Endothelial cell of umbilical vein (primary cell): ENCODE measurements at regions of chr1 and their contacts with region 1.

Region 1: DNA sequence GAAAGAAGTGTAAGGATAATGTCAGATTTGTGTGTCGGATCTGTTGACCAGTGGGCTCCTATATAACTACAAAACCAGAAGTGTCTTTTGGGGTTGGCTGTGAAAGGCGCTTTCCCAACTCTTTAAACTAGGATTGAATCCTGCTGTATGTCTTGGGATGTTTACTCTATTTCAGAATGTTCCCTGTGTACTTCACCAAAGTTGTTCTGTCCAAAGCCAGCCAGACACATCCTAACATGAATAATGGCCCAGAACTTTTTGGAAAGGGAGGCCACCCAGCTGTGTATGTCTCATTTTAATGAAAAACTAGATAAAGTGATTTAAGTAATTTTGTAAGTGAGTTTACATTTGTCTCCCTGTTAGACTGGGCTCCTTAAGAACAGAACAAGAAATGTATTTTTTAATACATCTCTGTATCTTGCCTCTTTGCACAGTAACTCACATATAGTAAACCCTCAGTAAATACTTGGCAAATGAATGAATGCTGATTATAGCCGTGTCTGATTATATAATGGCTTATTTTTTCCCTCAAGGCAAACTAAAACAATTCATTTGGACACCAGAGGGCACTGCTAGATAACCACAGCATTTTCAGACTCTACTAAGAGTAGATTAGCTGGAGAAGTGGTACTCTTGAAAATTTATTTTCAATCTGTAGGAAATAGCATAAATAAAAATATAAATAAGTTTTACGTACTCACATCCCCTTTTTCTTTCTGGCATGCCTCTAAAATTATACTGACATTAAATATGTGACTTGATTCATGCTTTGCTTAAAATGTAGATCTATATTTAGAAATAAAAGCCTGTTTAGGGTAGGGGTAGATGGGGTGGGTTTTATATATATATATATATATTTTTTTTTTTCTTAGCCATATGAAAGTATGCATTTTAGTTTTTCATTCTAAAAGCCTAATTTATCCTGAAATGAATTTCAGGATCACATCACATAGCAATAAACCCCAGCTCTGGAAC is 23.8 kb downstream of the TSEN15 start:
- DNase-seq: peak; percentile 75
- H3K4me3 ChIP-seq: no peak overlapping the region
- H3K27ac ChIP-seq: no peak overlapping the region
- H3K4me1 ChIP-seq: no peaks in the 10 kb centered on the region
- H3K27me3 ChIP-seq: no peaks in the 10 kb centered on the region
- CTCF ChIP-seq: peak; percentile 40 to 44
- POLR2A ChIP-seq: no peak

Region 2: DNA sequence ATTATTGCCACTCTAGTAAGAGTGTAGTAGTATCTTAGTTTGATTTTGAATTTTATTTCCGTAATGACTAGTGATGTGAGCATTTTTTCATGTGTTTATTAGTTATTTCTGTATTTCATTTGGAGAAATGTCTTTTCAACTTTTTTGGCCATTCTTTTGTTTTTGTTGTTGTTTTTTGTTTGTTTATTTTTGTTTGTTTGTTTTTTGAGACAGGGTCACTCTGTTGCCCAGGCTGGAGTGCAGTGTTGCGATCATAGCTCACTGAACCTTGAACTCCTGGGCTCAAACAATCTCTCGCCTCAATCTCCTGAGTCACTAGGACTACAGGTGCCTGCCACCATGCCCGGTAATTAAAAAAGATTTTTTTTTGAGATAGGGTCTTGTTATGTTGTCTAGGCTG is 52.2 kb after region 1 on chr1:
- CTCF ChIA-PET with region 1: no interaction called
- POLR2A ChIA-PET with region 1: no interaction called
- dilution Hi-C with region 1: no loop called
- intact Hi-C with region 1: no loop called
- DNase-seq: no peak
- H3K4me3 ChIP-seq: no peak overlapping the region
- H3K27ac ChIP-seq: no peak overlapping the region
- H3K4me1 ChIP-seq: no peaks in the 10 kb centered on the region
- H3K27me3 ChIP-seq: no peaks in the 10 kb centered on the region
- CTCF ChIP-seq: no peak
- POLR2A ChIP-seq: no peak

Region 3: GRCh38 chr1:184152434-184152898 is 77.1 kb after region 1 on chr1:
- CTCF ChIA-PET with region 1: interaction called, 6 read pairs
- POLR2A ChIA-PET with region 1: no interaction called
- dilution Hi-C with region 1: no loop called
- intact Hi-C with region 1: loop called (anchors 2 kb)
- DNase-seq: peak; percentile 93
- H3K4me3 ChIP-seq: peak overlapping the region; percentile 40 to 81 (median 74)
- H3K27ac ChIP-seq: peak overlapping the region; percentile 79
- H3K4me1 ChIP-seq: peaks cover 29% of the 10 kb centered on the region
- H3K27me3 ChIP-seq: peaks cover 0 to 3% of the 10 kb centered on the region in 2 experiments
- CTCF ChIP-seq: no peak
- POLR2A ChIP-seq: no peak

Region 4: DNA sequence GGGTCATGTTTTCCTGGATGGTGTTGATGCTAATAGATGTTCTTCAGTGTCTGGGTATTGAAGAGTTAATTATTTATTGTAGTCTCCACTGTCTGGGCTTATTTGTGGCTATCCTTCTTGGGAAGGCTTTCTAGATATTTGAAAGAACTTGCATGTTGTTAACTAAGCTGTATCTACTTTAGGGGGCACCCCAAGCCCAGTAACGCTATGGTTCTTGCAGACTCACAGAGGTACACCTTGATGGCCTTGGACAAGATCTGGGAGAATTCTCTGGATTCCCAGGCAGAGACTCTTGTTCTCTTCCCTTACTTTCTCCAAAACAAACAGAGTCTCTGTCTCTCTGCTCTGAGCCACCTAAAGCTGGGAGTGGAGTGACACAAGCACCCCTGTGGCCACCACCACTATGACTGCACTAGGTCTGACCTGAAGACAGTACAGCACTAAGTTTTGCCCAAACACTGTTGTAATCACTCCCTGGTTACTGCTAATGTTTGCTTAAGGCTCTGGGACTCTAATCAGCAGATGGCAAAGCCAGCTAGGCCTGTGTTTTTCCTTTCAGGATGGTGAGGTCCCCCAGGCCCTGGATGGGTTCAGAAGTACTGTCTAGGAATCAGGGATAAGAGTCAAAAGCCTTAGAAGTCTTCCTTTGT is 234.9 kb after region 1 on chr1:
- CTCF ChIA-PET with region 1: no interaction called
- POLR2A ChIA-PET with region 1: no interaction called
- dilution Hi-C with region 1: no loop called
- intact Hi-C with region 1: no loop called
- DNase-seq: no peak
- H3K4me3 ChIP-seq: no peak overlapping the region
- H3K27ac ChIP-seq: no peak overlapping the region
- H3K4me1 ChIP-seq: no peaks in the 10 kb centered on the region
- H3K27me3 ChIP-seq: peaks cover 2% of the 10 kb centered on the region in 2 experiments
- CTCF ChIP-seq: no peak
- POLR2A ChIP-seq: no peak

Region 5: GRCh38 chr1:184386312-184387068 is 311.1 kb after region 1 on chr1 and contains the start of gene C1orf21:
- CTCF ChIA-PET with region 1: interaction called, 7 read pairs
- POLR2A ChIA-PET with region 1: no interaction called
- dilution Hi-C with region 1: no loop called
- intact Hi-C with region 1: loop called (anchors 2 kb)
- DNase-seq: peak; percentile 82
- H3K4me3 ChIP-seq: peak within 1 kb of the TSS; percentile 40 to 84 (median 66)
- H3K27ac ChIP-seq: no peak within 1 kb of the TSS
- H3K4me1 ChIP-seq: peaks cover 15% of the 10 kb centered on the region
- H3K27me3 ChIP-seq: peaks cover 10 to 20% of the 10 kb centered on the region in 2 experiments
- CTCF ChIP-seq: no peak
- POLR2A ChIP-seq: no peak
- total RNA-seq, gene C1orf21: 8.5 and 10.0 TPM in 2 replicates

Region 6: DNA sequence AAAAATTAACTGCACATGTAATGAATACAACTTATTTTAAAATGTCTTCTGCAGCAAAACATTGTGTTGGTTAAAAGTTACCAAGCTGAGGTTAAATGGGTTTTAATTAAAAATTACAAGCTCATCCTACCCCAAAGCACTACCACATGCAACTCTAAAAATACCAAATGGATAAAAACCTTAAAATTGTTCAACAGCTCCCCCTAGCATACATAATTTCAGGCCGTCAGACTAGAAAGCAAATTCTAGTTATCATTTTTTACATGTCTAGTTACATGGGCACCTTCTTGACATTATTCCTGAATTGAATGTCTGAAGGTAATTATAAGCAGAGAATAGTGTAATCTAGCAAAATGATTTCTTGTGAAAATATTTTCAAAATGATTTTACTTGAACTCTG is 488.0 kb after region 1 on chr1:
- CTCF ChIA-PET with region 1: interaction called, 39 read pairs
- POLR2A ChIA-PET with region 1: no interaction called
- dilution Hi-C with region 1: no loop called
- intact Hi-C with region 1: loop called (anchors 1 kb)
- DNase-seq: peak; percentile 62
- H3K4me3 ChIP-seq: no peak overlapping the region
- H3K27ac ChIP-seq: no peak overlapping the region
- H3K4me1 ChIP-seq: no peaks in the 10 kb centered on the region
- H3K27me3 ChIP-seq: peaks cover 0 to 2% of the 10 kb centered on the region in 2 experiments
- CTCF ChIP-seq: peak; percentile 36
- POLR2A ChIP-seq: no peak